Activated B cell treated with CpG ODN at 0.5 μM for 24 hours (primary cell): ENCODE measurements at regions of chr15 and their contacts with region 1.

Region 1: GRCh38 chr15:70097337-70098169 is at the start of gene TLE3:
- DNase-seq: peak; percentile 96
- ATAC-seq: peak; percentile 56
- H3K4me3 Mint-ChIP-seq: peak within 1 kb of the TSS; percentile 98
- H3K27ac Mint-ChIP-seq: peak within 1 kb of the TSS; percentile 97
- H3K4me1 Mint-ChIP-seq: peaks cover 60% of the 10 kb centered on the region
- H3K27me3 Mint-ChIP-seq: peaks cover 2% of the 10 kb centered on the region
- CTCF ChIP-seq: no peak
- total RNA-seq, gene TLE3: 106 and 110 TPM in 2 replicates

Region 2: GRCh38 chr15:69462493-69463181 is 634.9 kb before region 1 on chr15:
- CTCF ChIA-PET with region 1: no interaction called
- POLR2A ChIA-PET with region 1: interaction called, 4 read pairs
- intact Hi-C with region 1: loop called (anchors 5 kb)
- DNase-seq: peak; percentile 87
- ATAC-seq: peak; percentile 99
- H3K4me3 Mint-ChIP-seq: peak overlapping the region; percentile 91
- H3K27ac Mint-ChIP-seq: peak overlapping the region; percentile 82
- H3K4me1 Mint-ChIP-seq: peaks cover 23% of the 10 kb centered on the region
- H3K27me3 Mint-ChIP-seq: no peaks in the 10 kb centered on the region
- CTCF ChIP-seq: peak; percentile 78

Region 3: GRCh38 chr15:69729161-69729748 is 368.3 kb before region 1 on chr15:
- CTCF ChIA-PET with region 1: no interaction called
- POLR2A ChIA-PET with region 1: interaction called, 6 read pairs
- intact Hi-C with region 1: loop called (anchors 1 kb)
- DNase-seq: peak; percentile 49
- ATAC-seq: no peak
- H3K4me3 Mint-ChIP-seq: no peak overlapping the region
- H3K27ac Mint-ChIP-seq: no peak overlapping the region
- H3K4me1 Mint-ChIP-seq: peaks cover 18% of the 10 kb centered on the region
- H3K27me3 Mint-ChIP-seq: peaks cover 3% of the 10 kb centered on the region
- CTCF ChIP-seq: peak; percentile 73

Region 4: DNA sequence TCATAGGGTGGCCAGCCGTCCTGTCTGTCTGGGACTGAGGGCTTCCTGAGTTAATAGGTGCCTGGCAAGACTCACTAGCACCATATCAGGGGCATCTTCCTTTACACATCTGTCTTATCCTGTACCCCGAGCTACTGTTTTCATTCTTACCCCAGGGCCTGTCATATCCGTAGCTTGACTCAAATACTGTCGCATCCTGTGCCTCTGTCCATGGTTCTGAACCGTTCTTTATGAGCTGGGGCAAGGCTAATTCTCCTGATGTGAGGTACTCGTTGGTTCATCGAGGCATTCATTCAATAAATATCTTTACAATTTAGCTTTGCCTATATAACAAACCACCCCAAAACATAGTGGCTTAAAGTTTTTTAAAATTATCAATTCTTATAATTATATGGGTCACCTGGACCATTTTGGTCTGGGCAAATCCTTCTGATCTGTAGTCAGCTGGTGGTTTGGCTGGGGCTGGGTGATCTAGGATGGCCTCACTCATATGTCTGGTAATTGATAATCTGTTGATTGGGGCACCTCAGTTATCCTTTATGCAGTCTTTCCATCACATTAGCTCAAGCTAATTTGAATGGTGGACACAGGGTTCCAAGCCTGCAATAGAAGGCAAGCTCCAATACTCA is 121.1 kb before region 1 on chr15:
- CTCF ChIA-PET with region 1: interaction called, 11 read pairs
- POLR2A ChIA-PET with region 1: interaction called, 17 read pairs
- intact Hi-C with region 1: loop called (anchors 1 kb)
- DNase-seq: no peak
- ATAC-seq: no peak
- H3K4me3 Mint-ChIP-seq: no peak overlapping the region
- H3K27ac Mint-ChIP-seq: peak overlapping the region; percentile 25
- H3K4me1 Mint-ChIP-seq: peaks cover 28% of the 10 kb centered on the region
- H3K27me3 Mint-ChIP-seq: peaks cover 33% of the 10 kb centered on the region
- CTCF ChIP-seq: no peak

Region 5: GRCh38 chr15:70152070-70152480 is 54.5 kb after region 1 on chr15:
- CTCF ChIA-PET with region 1: no interaction called
- POLR2A ChIA-PET with region 1: no interaction called
- intact Hi-C with region 1: no loop called
- DNase-seq: no peak
- ATAC-seq: peak; percentile 47
- H3K4me3 Mint-ChIP-seq: no peak overlapping the region
- H3K27ac Mint-ChIP-seq: no peak overlapping the region
- H3K4me1 Mint-ChIP-seq: peaks cover 3% of the 10 kb centered on the region
- H3K27me3 Mint-ChIP-seq: peaks cover 12% of the 10 kb centered on the region
- CTCF ChIP-seq: no peak

Region 6: GRCh38 chr15:70240082-70240481 is 142.5 kb after region 1 on chr15:
- CTCF ChIA-PET with region 1: no interaction called
- POLR2A ChIA-PET with region 1: interaction called, 10 read pairs
- intact Hi-C with region 1: loop called (anchors 5 kb)
- DNase-seq: no peak
- ATAC-seq: peak; percentile 97
- H3K4me3 Mint-ChIP-seq: peak overlapping the region; percentile 39
- H3K27ac Mint-ChIP-seq: peak overlapping the region; percentile 62
- H3K4me1 Mint-ChIP-seq: peaks cover 49% of the 10 kb centered on the region
- H3K27me3 Mint-ChIP-seq: no peaks in the 10 kb centered on the region
- CTCF ChIP-seq: no peak

Region 7: DNA sequence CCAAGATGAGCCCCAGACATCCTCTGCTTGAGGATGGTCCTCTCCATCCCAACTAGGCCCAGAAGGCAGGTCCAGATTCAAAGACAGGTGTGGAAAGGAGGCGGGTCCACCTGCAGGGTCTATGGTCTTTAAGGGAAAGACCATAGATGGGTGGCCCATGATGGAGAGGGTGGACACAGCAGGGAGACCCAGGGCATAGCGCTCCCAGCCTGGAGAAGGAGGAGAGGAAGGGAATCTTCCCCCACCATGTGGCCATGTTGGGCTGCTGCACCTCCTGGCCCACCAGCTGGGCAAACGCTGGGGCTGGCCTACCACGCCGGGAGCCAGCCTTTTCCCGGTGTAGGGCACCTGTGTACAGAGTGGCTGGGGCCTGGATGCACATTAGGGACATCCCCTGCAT is 265.3 kb after region 1 on chr15:
- CTCF ChIA-PET with region 1: interaction called, 4 read pairs
- POLR2A ChIA-PET with region 1: interaction called, 8 read pairs
- intact Hi-C with region 1: loop called (anchors 10 kb)
- DNase-seq: no peak
- ATAC-seq: no peak
- H3K4me3 Mint-ChIP-seq: no peak overlapping the region
- H3K27ac Mint-ChIP-seq: no peak overlapping the region
- H3K4me1 Mint-ChIP-seq: peaks cover 13% of the 10 kb centered on the region
- H3K27me3 Mint-ChIP-seq: no peaks in the 10 kb centered on the region
- CTCF ChIP-seq: no peak

Region 8: GRCh38 chr15:70512772-70513362 is 415.3 kb after region 1 on chr15:
- CTCF ChIA-PET with region 1: interaction called, 3 read pairs
- POLR2A ChIA-PET with region 1: interaction called, 5 read pairs
- intact Hi-C with region 1: loop called (anchors 1 kb)
- DNase-seq: no peak
- ATAC-seq: peak; percentile 80
- H3K4me3 Mint-ChIP-seq: no peak overlapping the region
- H3K27ac Mint-ChIP-seq: no peak overlapping the region
- H3K4me1 Mint-ChIP-seq: peaks cover 32% of the 10 kb centered on the region
- H3K27me3 Mint-ChIP-seq: peaks cover 5% of the 10 kb centered on the region
- CTCF ChIP-seq: no peak